IMR-90 (cell line): ENCODE measurements at regions of chr2 and their contacts with region 1.

Region 1: GRCh38 chr2:43595603-43596412 is at the start of gene THADA:
- DNase-seq: peak; percentile 99
- ATAC-seq: peak; percentile 99
- H3K4me3 ChIP-seq: peak within 1 kb of the TSS; percentile 83
- H3K27ac ChIP-seq: peak within 1 kb of the TSS; percentile 85
- H3K4me1 ChIP-seq: no peaks in the 10 kb centered on the region
- H3K27me3 ChIP-seq: no peaks in the 10 kb centered on the region
- CTCF ChIP-seq: no peak
- POLR2A ChIP-seq: peak; percentile 98
- RAD21 ChIP-seq: no peak
- total RNA-seq, gene THADA: 21.3 and 22.8 TPM in 2 replicates

Region 2: DNA sequence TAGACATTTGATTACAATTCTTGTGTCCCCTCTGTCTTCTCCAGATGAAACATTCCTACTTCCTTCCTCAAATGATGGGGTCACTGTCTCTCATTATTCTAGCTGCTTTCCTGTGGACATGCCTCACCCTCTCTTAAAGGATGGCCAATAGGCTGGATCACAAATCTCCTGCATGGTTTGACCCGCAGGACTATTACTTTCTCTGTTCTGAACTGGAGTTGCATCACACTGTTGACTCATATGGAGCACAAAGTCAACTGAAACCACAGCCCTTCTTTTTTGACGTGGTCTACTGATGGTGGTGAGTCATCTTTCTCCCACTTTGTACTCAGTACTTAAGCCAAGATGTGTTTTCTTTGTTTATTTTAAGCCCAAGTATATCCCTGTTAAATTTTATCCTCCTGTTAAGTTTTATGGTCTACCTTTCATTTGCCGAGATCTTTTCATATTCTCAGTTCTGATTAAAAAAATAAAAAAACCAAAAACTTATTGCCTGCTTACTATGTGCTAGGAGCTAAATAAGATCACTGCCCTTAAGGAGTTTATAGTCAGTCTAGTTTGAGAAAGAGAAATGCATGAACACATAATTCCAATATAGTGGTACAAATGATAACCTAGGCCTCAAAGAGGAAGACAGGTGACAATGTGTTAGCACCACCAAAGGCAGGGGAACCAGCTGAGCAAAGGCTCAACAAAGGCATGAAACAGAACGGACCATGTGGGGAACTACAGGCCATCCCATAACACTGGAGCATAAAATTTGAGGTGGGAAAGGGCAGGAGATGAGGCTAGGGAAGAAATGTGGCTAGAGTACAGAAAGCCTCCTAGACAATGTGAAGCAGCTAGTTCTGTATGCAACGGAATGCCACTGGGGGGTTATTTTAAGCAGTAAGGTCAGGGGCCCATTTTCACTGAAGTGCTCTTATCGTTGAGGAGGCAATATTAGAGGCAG is 301.8 kb before region 1 on chr2:
- CTCF ChIA-PET with region 1: no interaction called
- POLR2A ChIA-PET with region 1: no interaction called
- dilution Hi-C with region 1: no loop called
- in situ Hi-C with region 1: no loop called
- intact Hi-C with region 1: no loop called
- DNase-seq: peak; percentile 100
- ATAC-seq: peak; percentile 93
- H3K4me3 ChIP-seq: no peak overlapping the region
- H3K27ac ChIP-seq: peak overlapping the region; percentile 44; the same call in 1 of the 2 replicates
- H3K4me1 ChIP-seq: peaks cover 7% of the 10 kb centered on the region
- H3K27me3 ChIP-seq: no peaks in the 10 kb centered on the region
- CTCF ChIP-seq: no peak
- POLR2A ChIP-seq: no peak
- RAD21 ChIP-seq: no peak

Region 3: DNA sequence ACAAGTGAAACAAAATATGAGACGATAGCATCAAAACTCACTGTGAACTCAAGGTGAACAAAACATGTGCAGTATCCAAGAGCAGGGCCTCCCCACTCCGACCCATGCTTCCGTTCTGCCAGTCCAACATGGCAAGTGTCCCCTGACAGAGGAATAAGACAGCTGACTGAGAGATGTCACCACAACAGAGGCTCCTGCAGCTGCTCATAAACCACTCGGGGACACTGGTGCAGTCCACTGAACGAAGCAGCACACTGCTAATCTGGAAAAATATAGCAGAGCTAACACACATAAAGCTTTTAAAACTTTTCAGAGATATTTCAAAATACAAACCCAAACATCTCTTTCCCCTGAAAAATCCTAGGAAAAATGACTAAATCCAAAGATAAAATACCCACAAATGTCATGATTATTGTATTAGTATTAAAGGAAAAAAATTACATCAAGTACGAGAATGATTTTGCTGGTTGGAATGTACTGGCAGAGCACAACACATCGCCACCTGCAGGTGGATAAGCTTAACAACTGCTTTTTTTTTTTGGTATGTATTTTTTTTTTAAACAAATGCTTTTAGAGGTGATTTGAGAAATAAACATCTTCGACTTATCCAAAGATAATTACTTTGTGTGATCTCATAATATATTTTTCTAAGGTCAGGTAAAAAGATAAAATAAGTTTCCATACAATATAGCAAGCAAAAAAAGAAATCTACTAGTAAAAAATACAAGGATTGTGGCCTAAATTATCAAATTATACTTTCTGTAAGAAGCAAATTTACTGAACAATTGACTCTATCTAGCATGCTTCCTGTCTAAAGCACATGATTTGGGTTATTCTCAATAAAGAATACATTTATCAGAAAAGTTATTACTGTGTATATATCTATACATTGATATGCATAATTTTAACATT is 18.6 kb before region 1 on chr2:
- CTCF ChIA-PET with region 1: interaction called, 4 read pairs
- POLR2A ChIA-PET with region 1: interaction called, 11 read pairs
- dilution Hi-C with region 1: no loop called
- in situ Hi-C with region 1: no loop called
- intact Hi-C with region 1: no loop called
- DNase-seq: peak; percentile 84
- ATAC-seq: peak; percentile 77
- H3K4me3 ChIP-seq: no peak overlapping the region
- H3K27ac ChIP-seq: no peak overlapping the region
- H3K4me1 ChIP-seq: peaks cover 2% of the 10 kb centered on the region; the same call in 1 of the 2 replicates
- H3K27me3 ChIP-seq: no peaks in the 10 kb centered on the region
- CTCF ChIP-seq: peak; percentile 82
- POLR2A ChIP-seq: no peak
- RAD21 ChIP-seq: peak; percentile 26; the same call in 1 of the 2 replicates